ENCODE measurements at regions of chr2 and their contacts with region 1.

Region 1: DNA sequence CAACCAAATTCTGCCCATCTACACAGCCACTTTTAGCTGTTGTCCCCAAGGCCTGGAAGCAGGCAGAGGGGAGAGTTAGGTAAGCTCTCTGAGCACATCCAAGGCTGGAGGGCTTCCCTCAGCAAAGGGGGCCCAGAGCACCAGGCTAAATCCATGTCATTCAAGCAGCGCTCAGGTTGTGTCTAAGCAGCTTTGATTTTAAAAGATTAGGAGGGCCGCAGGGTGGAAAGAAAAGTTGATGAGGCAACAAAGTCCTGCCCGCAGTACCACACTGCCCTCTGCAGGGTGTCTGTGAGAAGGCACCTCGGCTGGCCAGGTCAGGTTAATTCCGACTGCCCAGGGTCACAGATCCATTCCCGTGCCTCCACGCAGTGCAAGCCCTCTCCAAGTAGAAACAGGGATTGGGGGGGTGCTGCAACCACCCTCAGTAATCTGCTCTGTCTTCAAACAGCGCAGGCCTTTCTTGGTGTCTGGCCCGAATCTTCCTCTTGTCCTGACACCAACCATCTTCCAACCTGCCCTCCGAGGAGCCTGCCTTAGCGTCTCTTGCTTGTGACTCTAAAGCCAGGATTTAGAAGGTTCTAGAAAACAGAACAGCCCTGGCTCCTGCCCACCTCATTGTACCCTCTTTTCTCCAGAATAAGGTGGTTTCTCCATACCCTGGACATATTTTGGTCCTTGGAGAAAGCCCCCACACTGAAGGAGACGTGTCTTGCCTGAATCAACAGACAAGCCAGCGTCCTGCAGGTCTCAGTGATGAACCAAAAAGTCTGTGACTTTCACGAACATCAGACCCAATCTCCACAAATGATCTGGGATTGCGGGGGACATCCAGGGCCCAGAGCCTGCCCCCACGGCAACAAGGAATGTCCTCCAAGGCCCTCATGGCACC is 289.2 kb downstream of the TNS1 start:
- DNase-seq: no peak
- H3K4me3 ChIP-seq: no peak overlapping the region
- H3K27ac ChIP-seq: peak overlapping the region; percentile 41 to 71 (median 63)
- H3K4me1 ChIP-seq: peaks cover 7 to 63% (median 41%) of the 10 kb centered on the region in 3 donors
- H3K27me3 ChIP-seq: no peaks in the 10 kb centered on the region
- CTCF ChIP-seq: peak; percentile 86 to 98 (median 96)
- POLR2A ChIP-seq: no peak

Region 2: GRCh38 chr2:216698895-216699294 is 1014.7 kb before region 1 on chr2:
- intact Hi-C with region 1: loop called (anchors 5 kb)
- DNase-seq: no peak
- H3K4me3 ChIP-seq: no peak overlapping the region
- H3K27ac ChIP-seq: peak overlapping the region in 2 of 4 donors; percentile 54 to 70
- H3K4me1 ChIP-seq: peaks cover 27 to 69% (median 33%) of the 10 kb centered on the region in 3 donors
- H3K27me3 ChIP-seq: peaks cover 0 to 42% (median 0%) of the 10 kb centered on the region in 4 donors
- CTCF ChIP-seq: peak; percentile 15 to 75 (median 67)
- POLR2A ChIP-seq: no peak

Region 3: GRCh38 chr2:217142649-217143266 is 570.9 kb before region 1 on chr2:
- intact Hi-C with region 1: loop called (anchors 10 kb)
- DNase-seq: no peak
- H3K4me3 ChIP-seq: no peak overlapping the region
- H3K27ac ChIP-seq: no peak overlapping the region
- H3K4me1 ChIP-seq: no peaks in the 10 kb centered on the region
- H3K27me3 ChIP-seq: no peaks in the 10 kb centered on the region
- CTCF ChIP-seq: peak in 4 of 6 experiments; percentile 38 to 72 (median 48)
- POLR2A ChIP-seq: no peak

Region 4: GRCh38 chr2:217421834-217422233 is 291.8 kb before region 1 on chr2:
- intact Hi-C with region 1: no loop called
- DNase-seq: no peak
- H3K4me3 ChIP-seq: no peak overlapping the region
- H3K27ac ChIP-seq: peak overlapping the region in 1 of 4 donors; percentile 66
- H3K4me1 ChIP-seq: peaks cover 0 to 7% (median 0%) of the 10 kb centered on the region in 3 donors
- H3K27me3 ChIP-seq: no peaks in the 10 kb centered on the region
- CTCF ChIP-seq: no peak
- POLR2A ChIP-seq: no peak

Region 5: GRCh38 chr2:217650716-217651360 is 62.8 kb before region 1 on chr2:
- intact Hi-C with region 1: loop called (anchors 5 kb)
- DNase-seq: no peak
- H3K4me3 ChIP-seq: no peak overlapping the region
- H3K27ac ChIP-seq: peak overlapping the region in 2 of 4 donors; percentile 88 to 90
- H3K4me1 ChIP-seq: peaks cover 6 to 64% (median 34%) of the 10 kb centered on the region in 3 donors
- H3K27me3 ChIP-seq: no peaks in the 10 kb centered on the region
- CTCF ChIP-seq: peak; percentile 38 to 82 (median 66)
- POLR2A ChIP-seq: no peak

Region 6: DNA sequence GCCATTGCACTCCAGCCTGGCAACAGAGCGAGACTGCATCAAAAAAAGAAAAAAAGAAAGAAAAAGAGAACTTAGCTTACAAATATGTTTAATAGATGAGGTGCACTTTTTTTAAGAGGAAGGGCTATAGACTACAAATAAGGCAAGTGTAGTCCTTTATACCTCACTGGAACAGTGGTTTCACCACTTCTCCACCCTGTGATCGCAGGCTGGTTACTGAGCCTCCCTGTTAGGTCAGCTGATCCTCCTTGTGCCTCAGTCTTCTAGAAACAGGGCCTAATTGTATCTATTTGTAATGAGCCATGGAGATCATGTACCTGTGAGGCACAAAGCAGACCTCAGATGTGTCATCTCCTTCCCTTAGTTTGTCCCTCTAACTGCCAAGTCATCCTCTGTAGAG is 416.7 kb after region 1 on chr2:
- intact Hi-C with region 1: no loop called
- DNase-seq: no peak
- H3K4me3 ChIP-seq: peak overlapping the region in 2 of 4 donors; percentile 37 to 42
- H3K27ac ChIP-seq: peak overlapping the region; percentile 34 to 89 (median 84)
- H3K4me1 ChIP-seq: peaks cover 7 to 67% (median 27%) of the 10 kb centered on the region in 3 donors
- H3K27me3 ChIP-seq: no peaks in the 10 kb centered on the region
- CTCF ChIP-seq: no peak
- POLR2A ChIP-seq: no peak